GM13977 (cell line): ENCODE measurements at regions of chr10 and their contacts with region 1.

Region 1: GRCh38 chr10:114876602-114877300 is 55.2 kb downstream of the FHIP2A start:
- DNase-seq: peak; percentile 70
- CTCF ChIP-seq: peak; percentile 88

Region 2: DNA sequence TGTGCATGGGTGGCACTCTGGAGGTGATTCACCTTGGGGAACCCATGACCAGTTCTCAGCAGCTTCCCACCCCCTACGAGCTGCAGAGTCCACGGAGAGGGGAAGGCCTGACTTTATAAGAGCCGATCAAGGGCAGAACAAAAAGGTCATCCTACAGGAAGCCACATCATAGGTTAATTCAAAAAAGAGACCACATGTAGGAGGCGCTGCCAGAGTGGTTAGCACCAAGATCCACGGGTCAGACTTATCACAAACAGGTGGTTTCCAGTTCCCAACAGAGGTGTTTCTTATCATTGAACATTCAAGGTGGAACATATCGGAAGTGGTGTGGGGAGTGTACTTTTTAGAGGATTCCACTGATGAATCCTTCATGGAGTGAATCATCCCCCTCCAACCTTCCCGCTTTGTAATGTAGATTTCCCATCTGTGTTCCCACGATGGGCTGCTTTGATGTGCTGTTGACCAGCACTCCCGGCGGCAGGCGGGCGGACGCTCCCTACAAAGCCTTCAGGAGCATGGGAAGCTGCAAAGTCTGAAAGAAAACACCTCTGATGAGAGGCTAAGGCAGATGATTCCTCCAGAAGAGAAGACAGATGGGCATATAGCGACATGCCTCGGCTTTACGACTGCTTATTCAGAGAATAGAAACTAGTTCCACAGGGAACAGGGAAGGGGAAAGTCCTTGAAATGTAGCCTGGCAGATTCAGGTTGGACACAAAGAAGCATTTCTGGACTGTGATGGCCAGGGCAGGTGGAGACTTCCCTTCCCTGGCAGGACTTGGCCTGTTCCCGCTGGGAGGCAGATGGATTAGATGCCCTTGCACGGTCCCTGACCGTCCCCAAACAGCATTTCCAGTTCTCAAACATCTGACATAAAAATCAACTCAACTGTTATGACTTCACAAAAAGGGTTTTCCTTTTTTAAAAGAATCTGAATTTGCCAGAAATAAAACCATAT is 539.0 kb before region 1 on chr10:
- in situ Hi-C with region 1: no loop called
- DNase-seq: peak; percentile 56
- CTCF ChIP-seq: no peak

Region 3: GRCh38 chr10:115129752-115130151 is 253.0 kb after region 1 on chr10:
- in situ Hi-C with region 1: loop called (anchors 10 kb)
- DNase-seq: no peak
- CTCF ChIP-seq: peak; percentile 18

Region 4: GRCh38 chr10:115417585-115418265 is 541.0 kb after region 1 on chr10:
- in situ Hi-C with region 1: loop called (anchors 25 kb)
- DNase-seq: peak; percentile 37
- CTCF ChIP-seq: peak; percentile 80